IMR-90 (cell line): ENCODE measurements at regions of chr19 and their contacts with region 1.

Region 1: GRCh38 chr19:20051841-20052768 is 12.8 kb upstream of the ZNF682 start:
- DNase-seq: peak; percentile 96
- ATAC-seq: peak; percentile 99
- H3K4me3 ChIP-seq: peak overlapping the region; percentile 81
- H3K27ac ChIP-seq: peak overlapping the region; percentile 41
- H3K4me1 ChIP-seq: no peaks in the 10 kb centered on the region
- H3K27me3 ChIP-seq: no peaks in the 10 kb centered on the region
- CTCF ChIP-seq: no peak
- POLR2A ChIP-seq: no peak
- RAD21 ChIP-seq: no peak

Region 2: GRCh38 chr19:19668230-19669012 is 383.7 kb before region 1 on chr19 and contains the start of gene ZNF101:
- CTCF ChIA-PET with region 1: no interaction called
- POLR2A ChIA-PET with region 1: no interaction called
- dilution Hi-C with region 1: no loop called
- in situ Hi-C with region 1: no loop called
- intact Hi-C with region 1: no loop called
- DNase-seq: peak; percentile 85
- ATAC-seq: peak; percentile 81
- H3K4me3 ChIP-seq: peak within 1 kb of the TSS; percentile 63
- H3K27ac ChIP-seq: peak within 1 kb of the TSS; percentile 34
- H3K4me1 ChIP-seq: peaks cover 4% of the 10 kb centered on the region; the same call in 1 of the 2 replicates
- H3K27me3 ChIP-seq: no peaks in the 10 kb centered on the region
- CTCF ChIP-seq: no peak
- POLR2A ChIP-seq: no peak
- RAD21 ChIP-seq: no peak
- total RNA-seq, gene ZNF101: 7.3 and 8.3 TPM in 2 replicates

Region 3: GRCh38 chr19:20077791-20078463 is 25.8 kb after region 1 on chr19 and contains the start of gene ZNF90:
- CTCF ChIA-PET with region 1: no interaction called
- POLR2A ChIA-PET with region 1: no interaction called
- dilution Hi-C with region 1: no loop called
- in situ Hi-C with region 1: no loop called
- intact Hi-C with region 1: loop called (anchors 1 kb)
- DNase-seq: peak; percentile 93
- ATAC-seq: peak; percentile 95
- H3K4me3 ChIP-seq: peak within 1 kb of the TSS; percentile 58
- H3K27ac ChIP-seq: peak within 1 kb of the TSS; percentile 42; the same call in 1 of the 2 replicates
- H3K4me1 ChIP-seq: no peaks in the 10 kb centered on the region
- H3K27me3 ChIP-seq: no peaks in the 10 kb centered on the region
- CTCF ChIP-seq: 0 out of 2 replicates have a peak, but pooled peaks have one; percentile 3
- POLR2A ChIP-seq: no peak
- RAD21 ChIP-seq: no peak
- total RNA-seq, gene ZNF90: 0.28 and 0.36 TPM in 2 replicates

Region 4: GRCh38 chr19:20167020-20167644 is 115.0 kb after region 1 on chr19 and contains the start of gene ZNF486:
- CTCF ChIA-PET with region 1: no interaction called
- POLR2A ChIA-PET with region 1: no interaction called
- dilution Hi-C with region 1: no loop called
- in situ Hi-C with region 1: no loop called
- intact Hi-C with region 1: loop called (anchors 1 kb)
- DNase-seq: peak; percentile 94
- ATAC-seq: peak; percentile 99
- H3K4me3 ChIP-seq: peak within 1 kb of the TSS; percentile 58
- H3K27ac ChIP-seq: peak within 1 kb of the TSS; percentile 65
- H3K4me1 ChIP-seq: 0 out of 2 replicates have a peak, but pooled peaks cover 1% of the 10 kb centered on the region
- H3K27me3 ChIP-seq: no peaks in the 10 kb centered on the region
- CTCF ChIP-seq: no peak
- POLR2A ChIP-seq: peak; percentile 75
- RAD21 ChIP-seq: no peak
- total RNA-seq, gene ZNF486: 4.1 and 6.9 TPM in 2 replicates

Region 5: DNA sequence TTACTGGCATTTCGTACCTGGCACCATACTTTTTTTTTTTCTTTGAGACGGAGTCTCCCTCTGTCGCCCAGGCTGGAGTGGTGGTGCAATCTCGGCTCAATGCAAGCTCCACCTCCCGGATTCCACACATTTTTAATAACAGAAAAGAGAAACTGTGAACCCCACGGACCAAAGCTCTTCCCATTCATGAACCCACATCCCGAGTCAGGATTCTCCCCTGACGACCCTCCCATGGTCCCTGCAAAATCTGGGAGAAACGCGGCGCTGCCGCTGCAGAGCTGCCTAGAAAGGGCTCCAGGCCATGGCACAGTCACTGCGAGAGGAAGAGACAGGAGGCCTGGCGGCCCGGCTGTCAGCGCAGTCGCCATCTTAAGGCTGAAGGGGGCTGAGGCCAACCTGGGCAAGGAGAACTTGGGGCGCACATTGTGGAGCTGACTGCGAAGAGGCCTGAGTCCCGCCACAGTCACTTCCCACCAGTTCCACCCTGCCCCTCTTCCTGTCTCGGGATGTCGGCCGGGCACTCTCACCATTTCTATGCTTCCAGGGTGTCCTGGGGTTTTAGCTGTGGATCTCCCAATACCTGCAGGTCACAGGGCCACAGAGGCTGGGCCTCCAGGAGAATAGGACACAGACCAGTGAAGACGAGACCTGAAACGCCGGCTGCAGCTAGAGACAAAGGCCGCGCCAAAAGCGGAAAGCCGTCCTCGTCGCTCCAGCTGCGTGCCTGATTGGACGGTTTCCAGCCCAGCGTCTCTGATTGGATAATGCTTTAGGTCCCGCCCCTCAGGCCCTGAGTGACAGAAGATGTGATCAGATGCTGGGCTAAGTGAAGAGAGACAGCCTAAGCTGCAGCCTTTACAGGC is 185.9 kb after region 1 on chr19:
- CTCF ChIA-PET with region 1: no interaction called
- POLR2A ChIA-PET with region 1: no interaction called
- dilution Hi-C with region 1: no loop called
- in situ Hi-C with region 1: no loop called
- intact Hi-C with region 1: loop called (anchors 10 kb)
- DNase-seq: peak; percentile 77
- ATAC-seq: peak; percentile 98
- H3K4me3 ChIP-seq: peak overlapping the region; percentile 79
- H3K27ac ChIP-seq: peak overlapping the region; percentile 14; the same call in 1 of the 2 replicates
- H3K4me1 ChIP-seq: no peaks in the 10 kb centered on the region
- H3K27me3 ChIP-seq: no peaks in the 10 kb centered on the region
- CTCF ChIP-seq: no peak
- POLR2A ChIP-seq: no peak
- RAD21 ChIP-seq: no peak